ENCODE measurements at regions of chr19 and their contacts with region 1.

Region 1: GRCh38 chr19:18160971-18161635 is 8.1 kb downstream of the PIK3R2 start:
- DNase-seq: peak in 1 of 2 experiments; percentile 92
- H3K4me3 ChIP-seq: peak overlapping the region in 2 of 4 experiments; percentile 2 to 45; a peak in 4 of 8 replicates
- H3K27ac ChIP-seq: no peak overlapping the region
- H3K4me1 ChIP-seq: peaks cover 0 to 10% (median 7%) of the 10 kb centered on the region in 4 experiments; a peak in 6 of 7 replicates
- H3K27me3 ChIP-seq: no peaks in the 10 kb centered on the region
- CTCF ChIP-seq: peak; percentile 47 to 93 (median 72)
- EP300 ChIP-seq: no peak
- POLR2A ChIP-seq: peak in 1 of 2 experiments; percentile 43; a peak in 1 of 3 replicates
- RAD21 ChIP-seq: 0 out of 4 replicates have a peak, but pooled peaks of 1 of the 2 experiments have one; percentile 28

Region 2: GRCh38 chr19:18173572-18174288 is 12.6 kb after region 1 on chr19 and contains the start of gene IFI30:
- CTCF ChIA-PET with region 1: interaction called, 10 read pairs
- POLR2A ChIA-PET with region 1: interaction called, 11 read pairs
- DNase-seq: peak in 1 of 2 experiments; percentile 84
- H3K4me3 ChIP-seq: peak within 1 kb of the TSS; percentile 44 to 81 (median 66)
- H3K27ac ChIP-seq: no peak within 1 kb of the TSS
- H3K4me1 ChIP-seq: peaks cover 0 to 5% (median 2%) of the 10 kb centered on the region in 4 experiments; a peak in 2 of 7 replicates
- H3K27me3 ChIP-seq: peaks cover 0 to 17% (median 7%) of the 10 kb centered on the region in 4 experiments; a peak in 5 of 7 replicates
- CTCF ChIP-seq: no peak
- EP300 ChIP-seq: no peak
- POLR2A ChIP-seq: no peak; a peak in 1 of 3 replicates
- RAD21 ChIP-seq: no peak
- total RNA-seq, gene IFI30: 25.9 and 28.9 TPM in 2 replicates

Measured in H1 (cell line).